Left ventricle myocardium superior (tissue), 1 donor: ENCODE measurements at regions of chr12 and their contacts with region 1.

Region 1: GRCh38 chr12:64352181-64352580 is 38.4 kb downstream of the C12orf56 start:
- DNase-seq: no peak
- ATAC-seq: no peak

Region 2: GRCh38 chr12:64373193-64373592 is 21.0 kb after region 1 on chr12:
- intact Hi-C with region 1: loop called (anchors 2 kb)
- DNase-seq: no peak
- ATAC-seq: no peak

Region 3: DNA sequence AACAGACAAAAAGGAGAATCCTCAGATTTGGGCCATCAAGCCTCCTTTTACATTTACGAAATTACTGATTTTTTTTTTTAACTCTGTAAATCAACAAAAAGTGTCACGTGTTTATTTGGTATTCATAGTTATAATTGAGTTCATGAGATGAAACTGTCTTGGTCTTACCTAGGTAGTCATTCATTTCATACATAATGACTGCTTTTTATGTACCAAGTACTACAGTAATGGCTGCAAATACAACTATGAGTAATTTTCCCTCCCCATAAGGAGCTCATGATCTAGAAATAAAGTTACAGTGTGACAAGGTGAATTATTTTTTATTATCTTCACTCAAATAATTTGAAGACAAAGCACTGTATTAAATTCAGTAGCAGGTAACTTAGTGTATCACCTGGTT is 93.3 kb after region 1 on chr12:
- intact Hi-C with region 1: no loop called
- DNase-seq: no peak
- ATAC-seq: no peak

Region 4: DNA sequence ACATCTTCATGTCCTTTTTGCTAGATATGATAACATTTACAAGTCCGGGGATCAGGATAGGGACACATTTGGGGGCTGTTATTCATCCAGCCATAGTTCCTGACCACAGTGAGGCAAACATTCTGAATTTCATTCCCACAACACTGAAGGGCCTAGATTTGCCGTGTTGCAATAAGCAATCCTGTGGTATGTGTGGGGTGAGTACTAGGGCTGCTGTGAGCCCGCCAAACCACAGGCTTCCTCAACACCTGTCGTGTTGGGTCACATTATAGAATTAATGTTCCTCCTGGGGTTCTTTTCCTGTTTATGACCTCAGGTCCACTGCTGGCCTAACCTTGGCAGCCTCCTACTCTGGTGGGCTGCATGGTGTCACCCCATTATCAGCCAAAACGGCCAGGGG is 591.5 kb after region 1 on chr12:
- intact Hi-C with region 1: no loop called
- DNase-seq: no peak
- ATAC-seq: no peak